GM10248 (cell line): ENCODE measurements at regions of chr6 and their contacts with region 1.

Region 1: GRCh38 chr6:74574794-74575193 is 631.1 kb downstream of the COL12A1 start:
- DNase-seq: no peak
- CTCF ChIP-seq: peak; percentile 20

Region 2: DNA sequence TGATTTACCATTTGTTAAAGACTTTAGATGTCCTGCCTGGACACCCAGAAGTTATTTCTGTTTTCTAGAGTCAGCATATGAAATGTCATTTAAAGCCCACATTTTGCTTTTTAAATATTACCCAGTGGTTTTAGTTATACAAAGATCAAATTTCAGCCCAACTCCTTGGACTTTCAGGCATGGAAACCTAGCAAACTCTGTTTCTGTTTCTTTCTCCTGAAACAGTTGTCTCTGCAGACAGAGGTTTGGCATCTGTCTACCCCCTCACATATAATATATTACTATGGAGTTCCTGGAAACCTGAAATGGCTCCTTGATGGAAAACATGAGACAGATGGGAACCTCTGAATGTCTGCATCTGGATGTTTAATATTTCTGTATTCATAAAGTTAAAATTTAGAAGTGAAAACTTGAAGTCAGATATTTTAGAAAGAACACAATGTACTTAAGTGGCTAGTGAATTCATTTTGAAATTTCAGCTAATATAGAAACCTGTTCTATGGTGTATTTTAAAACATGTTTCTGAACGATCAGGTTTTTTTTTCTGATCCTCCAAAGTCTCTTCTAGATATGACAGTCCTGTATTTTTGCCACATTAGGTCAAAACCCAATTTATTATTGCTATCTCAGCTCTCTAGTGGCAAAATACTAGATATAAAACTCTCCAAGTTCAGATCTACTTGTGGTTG is 135.5 kb before region 1 on chr6:
- CTCF ChIA-PET with region 1: no interaction called
- POLR2A ChIA-PET with region 1: no interaction called
- DNase-seq: no peak
- CTCF ChIP-seq: no peak

Region 3: GRCh38 chr6:74598473-74599393 is 23.9 kb after region 1 on chr6:
- CTCF ChIA-PET with region 1: interaction called, 10 read pairs
- POLR2A ChIA-PET with region 1: no interaction called
- DNase-seq: peak; percentile 63
- CTCF ChIP-seq: no peak